ENCODE measurements at regions of chr11 and their contacts with region 1.

Region 1: GRCh38 chr11:67656278-67656922 is 5.9 kb upstream of the ACY3 start:
- DNase-seq: peak in 1 of 2 experiments; percentile 8
- H3K4me3 ChIP-seq: no peak overlapping the region
- H3K4me3 Mint-ChIP-seq: no peak overlapping the region
- H3K27ac Mint-ChIP-seq: no peak overlapping the region
- H3K4me1 ChIP-seq: no peaks in the 10 kb centered on the region
- H3K4me1 Mint-ChIP-seq: peaks cover 8% of the 10 kb centered on the region
- H3K27me3 ChIP-seq: no peaks in the 10 kb centered on the region
- H3K27me3 Mint-ChIP-seq: no peaks in the 10 kb centered on the region
- CTCF ChIP-seq: no peak

Region 2: GRCh38 chr11:67613960-67614715 is 42.3 kb before region 1 on chr11:
- CTCF ChIA-PET with region 1: interaction called, 11 read pairs
- POLR2A ChIA-PET with region 1: no interaction called
- intact Hi-C with region 1: no loop called
- DNase-seq: peak; percentile 74 to 85
- H3K4me3 ChIP-seq: no peak overlapping the region
- H3K4me3 Mint-ChIP-seq: no peak overlapping the region
- H3K27ac Mint-ChIP-seq: no peak overlapping the region
- H3K4me1 ChIP-seq: no peaks in the 10 kb centered on the region
- H3K4me1 Mint-ChIP-seq: peaks cover 6% of the 10 kb centered on the region
- H3K27me3 ChIP-seq: no peaks in the 10 kb centered on the region
- H3K27me3 Mint-ChIP-seq: no peaks in the 10 kb centered on the region
- CTCF ChIP-seq: peak; percentile 89 to 92

Region 3: GRCh38 chr11:67640021-67640757 is 16.2 kb before region 1 on chr11:
- CTCF ChIA-PET with region 1: interaction called, 9 read pairs
- POLR2A ChIA-PET with region 1: no interaction called
- intact Hi-C with region 1: loop called (anchors 1 kb)
- DNase-seq: peak; percentile 87 to 88
- H3K4me3 ChIP-seq: no peak overlapping the region
- H3K4me3 Mint-ChIP-seq: no peak overlapping the region
- H3K27ac Mint-ChIP-seq: no peak overlapping the region
- H3K4me1 ChIP-seq: 0 out of 2 replicates have a peak, but pooled peaks cover 3% of the 10 kb centered on the region
- H3K4me1 Mint-ChIP-seq: no peaks in the 10 kb centered on the region
- H3K27me3 ChIP-seq: no peaks in the 10 kb centered on the region
- H3K27me3 Mint-ChIP-seq: no peaks in the 10 kb centered on the region
- CTCF ChIP-seq: peak; percentile 86 to 96

Region 4: GRCh38 chr11:67680696-67681470 is 24.5 kb after region 1 on chr11:
- CTCF ChIA-PET with region 1: no interaction called
- POLR2A ChIA-PET with region 1: no interaction called
- intact Hi-C with region 1: no loop called
- DNase-seq: no peak
- H3K4me3 ChIP-seq: no peak overlapping the region
- H3K4me3 Mint-ChIP-seq: no peak overlapping the region
- H3K27ac Mint-ChIP-seq: no peak overlapping the region
- H3K4me1 ChIP-seq: peaks cover 24% of the 10 kb centered on the region
- H3K4me1 Mint-ChIP-seq: peaks cover 23% of the 10 kb centered on the region
- H3K27me3 ChIP-seq: no peaks in the 10 kb centered on the region
- H3K27me3 Mint-ChIP-seq: peaks cover 5% of the 10 kb centered on the region
- CTCF ChIP-seq: no peak